ENCODE measurements at regions of chr16 and their contacts with region 1.

Region 1: GRCh38 chr16:23435500-23435899 is 17.5 kb downstream of the COG7 start:
- DNase-seq: no peak
- H3K4me3 ChIP-seq: no peak overlapping the region
- CTCF ChIP-seq: peak; percentile 86

Region 2: DNA sequence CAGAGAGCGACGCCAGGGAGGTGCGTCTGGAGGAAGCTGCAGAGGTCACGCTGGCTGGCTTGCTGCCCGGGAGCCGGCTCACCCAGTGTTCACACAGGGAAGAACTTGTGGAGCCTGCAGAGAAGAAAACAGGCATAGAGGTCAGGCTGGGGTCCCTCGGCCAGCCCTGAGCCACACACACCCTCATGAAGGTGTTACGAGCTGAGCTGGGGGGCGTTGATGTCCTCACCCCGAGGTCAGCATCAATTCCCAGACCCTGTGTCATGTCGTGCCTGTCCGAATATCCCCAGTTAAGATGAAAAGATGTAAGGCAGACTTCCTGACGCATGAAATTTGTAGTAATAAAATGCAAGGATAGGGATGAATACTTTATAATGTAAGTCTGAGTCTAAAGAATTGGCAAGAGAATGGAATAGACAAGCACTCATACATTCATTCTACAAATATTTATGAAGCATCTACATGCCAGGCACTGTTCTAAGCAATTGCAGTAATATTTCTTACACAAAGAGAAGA is 363.4 kb before region 1 on chr16:
- CTCF ChIA-PET with region 1: interaction called, 16 read pairs
- POLR2A ChIA-PET with region 1: no interaction called
- DNase-seq: no peak
- H3K4me3 ChIP-seq: no peak overlapping the region
- CTCF ChIP-seq: no peak

Region 3: GRCh38 chr16:23174622-23175021 is 260.9 kb before region 1 on chr16:
- CTCF ChIA-PET with region 1: interaction called, 245 read pairs
- POLR2A ChIA-PET with region 1: no interaction called
- DNase-seq: no peak
- H3K4me3 ChIP-seq: no peak overlapping the region
- CTCF ChIP-seq: no peak

Region 4: GRCh38 chr16:23232806-23233205 is 202.7 kb before region 1 on chr16:
- CTCF ChIA-PET with region 1: no interaction called
- POLR2A ChIA-PET with region 1: no interaction called
- DNase-seq: no peak
- H3K4me3 ChIP-seq: no peak overlapping the region
- CTCF ChIP-seq: no peak

Region 5: GRCh38 chr16:23408823-23409298 is 26.6 kb before region 1 on chr16:
- CTCF ChIA-PET with region 1: interaction called, 44 read pairs
- POLR2A ChIA-PET with region 1: no interaction called
- DNase-seq: no peak
- H3K4me3 ChIP-seq: no peak overlapping the region
- CTCF ChIP-seq: no peak

Region 6: GRCh38 chr16:23452572-23453337 is 17.3 kb after region 1 on chr16 and contains the start of gene COG7:
- CTCF ChIA-PET with region 1: interaction called, 179 read pairs
- POLR2A ChIA-PET with region 1: no interaction called
- DNase-seq: peak; percentile 47
- H3K4me3 ChIP-seq: peak within 1 kb of the TSS; percentile 96
- CTCF ChIP-seq: no peak

Measured in AG04449 (cell line).